CD8-positive, alpha-beta T cell (primary cell): ENCODE measurements at regions of chr1 and their contacts with region 1.

Region 1: GRCh38 chr1:159780583-159781582 is at the start of gene DUSP23:
- DNase-seq: peak; percentile 90 to 98 (median 95)
- ATAC-seq: peak; percentile 96
- H3K4me3 ChIP-seq: peak within 1 kb of the TSS; percentile 59 to 69
- H3K4me3 Mint-ChIP-seq: peak within 1 kb of the TSS; percentile 89
- H3K27ac ChIP-seq: peak within 1 kb of the TSS; percentile 16 to 62
- H3K27ac Mint-ChIP-seq: peak within 1 kb of the TSS; percentile 89
- H3K4me1 ChIP-seq: peaks cover 10% of the 10 kb centered on the region
- H3K4me1 Mint-ChIP-seq: peaks cover 28% of the 10 kb centered on the region
- H3K27me3 ChIP-seq: no peaks in the 10 kb centered on the region
- H3K27me3 Mint-ChIP-seq: no peaks in the 10 kb centered on the region
- CTCF ChIP-seq: peak; percentile 78
- total RNA-seq, gene DUSP23: 3.8 to 6.3 TPM

Region 2: DNA sequence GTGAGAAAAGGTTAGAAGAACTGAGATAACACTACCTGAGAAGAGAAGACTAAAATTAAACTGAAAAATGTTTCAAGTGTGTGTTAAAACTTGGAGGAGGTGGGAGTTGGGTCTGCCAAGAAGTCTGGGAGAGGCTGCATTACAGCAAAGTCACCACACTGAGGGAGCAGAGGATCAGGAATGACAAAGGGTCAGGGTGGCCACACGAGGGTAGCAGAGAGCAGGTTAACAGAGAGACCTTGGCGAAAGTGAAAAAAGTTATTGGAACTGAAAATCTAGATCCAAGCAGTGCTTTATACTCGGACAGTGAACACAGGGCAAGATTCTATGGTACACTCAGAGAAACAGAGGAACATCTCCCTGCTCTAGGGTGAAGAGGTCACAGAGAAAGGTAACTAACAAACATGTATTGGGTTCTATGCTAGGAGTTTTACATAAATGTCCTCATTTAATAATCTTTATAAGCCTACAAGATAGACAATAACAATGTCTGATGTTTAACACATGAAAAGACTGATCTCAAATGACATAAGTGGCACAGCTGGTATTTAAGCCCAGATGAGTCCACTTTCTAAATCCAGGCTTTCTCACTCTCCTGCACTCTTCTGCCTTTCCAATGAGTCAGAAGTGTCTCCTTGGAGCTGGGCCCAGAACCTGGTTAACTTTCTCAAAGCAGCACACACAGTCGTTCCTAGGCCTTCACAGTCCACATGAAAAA is 619.7 kb before region 1 on chr1:
- CTCF ChIA-PET with region 1: no interaction called
- POLR2A ChIA-PET with region 1: no interaction called
- intact Hi-C with region 1: loop called in 1 of 2 experiments (anchors 5 kb)
- DNase-seq: peak; percentile 28 to 75 (median 63)
- ATAC-seq: peak; percentile 75
- H3K4me3 ChIP-seq: no peak overlapping the region
- H3K4me3 Mint-ChIP-seq: no peak overlapping the region
- H3K27ac ChIP-seq: no peak overlapping the region
- H3K27ac Mint-ChIP-seq: no peak overlapping the region
- H3K4me1 ChIP-seq: no peaks in the 10 kb centered on the region
- H3K4me1 Mint-ChIP-seq: peaks cover 2% of the 10 kb centered on the region
- H3K27me3 ChIP-seq: peaks cover 0 to 4% of the 10 kb centered on the region in 2 experiments
- H3K27me3 Mint-ChIP-seq: peaks cover 47% of the 10 kb centered on the region
- CTCF ChIP-seq: peak; percentile 79

Region 3: DNA sequence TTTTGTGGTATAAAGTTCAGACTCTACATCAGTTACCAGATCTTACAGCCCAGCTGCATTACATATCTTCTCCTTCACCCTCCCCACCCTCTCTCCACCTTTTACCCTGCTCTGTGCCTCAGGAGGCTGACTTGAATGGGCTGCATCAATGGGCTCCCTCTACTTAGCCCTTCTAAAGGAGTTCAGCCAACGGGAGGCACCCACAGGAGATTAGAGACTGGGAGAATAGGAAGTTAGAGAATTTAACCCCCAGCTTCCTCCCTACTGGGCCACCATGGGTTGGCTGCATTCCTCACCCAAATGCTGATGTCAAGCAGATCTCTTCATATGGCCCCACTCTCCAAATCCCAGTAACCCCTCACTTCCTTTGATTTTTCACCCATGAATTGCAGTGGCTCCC is 17.2 kb before region 1 on chr1:
- CTCF ChIA-PET with region 1: no interaction called
- POLR2A ChIA-PET with region 1: no interaction called
- intact Hi-C with region 1: no loop called
- DNase-seq: no peak
- ATAC-seq: no peak
- H3K4me3 ChIP-seq: no peak overlapping the region
- H3K4me3 Mint-ChIP-seq: no peak overlapping the region
- H3K27ac ChIP-seq: no peak overlapping the region
- H3K27ac Mint-ChIP-seq: no peak overlapping the region
- H3K4me1 ChIP-seq: no peaks in the 10 kb centered on the region
- H3K4me1 Mint-ChIP-seq: no peaks in the 10 kb centered on the region
- H3K27me3 ChIP-seq: no peaks in the 10 kb centered on the region
- H3K27me3 Mint-ChIP-seq: peaks cover 13% of the 10 kb centered on the region
- CTCF ChIP-seq: no peak

Region 4: DNA sequence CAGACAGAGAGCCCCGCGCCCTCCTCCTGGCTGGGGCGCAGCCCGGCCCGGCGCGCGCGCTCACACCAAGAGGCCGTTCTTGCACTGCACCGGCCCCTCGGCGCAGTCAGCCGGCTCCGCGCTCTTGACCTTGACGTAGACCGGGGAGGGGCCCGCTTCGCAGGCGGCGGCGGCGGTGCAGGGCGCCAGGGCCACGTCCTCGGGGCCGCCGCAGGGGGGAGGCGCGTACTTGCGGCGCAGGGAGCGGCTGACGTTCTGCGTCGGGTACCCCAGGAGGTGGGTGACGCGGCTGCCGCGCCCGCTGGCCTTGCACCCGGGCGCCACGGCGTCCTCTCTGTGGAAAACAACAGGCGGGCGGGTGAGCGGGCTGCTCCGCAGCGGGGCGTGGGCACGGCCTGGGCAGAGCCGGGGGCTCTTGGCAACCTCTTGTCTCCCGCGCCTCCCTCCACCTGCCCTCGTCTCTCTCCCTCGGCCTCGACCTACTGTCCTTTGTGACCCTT is 73.9 kb after region 1 on chr1:
- CTCF ChIA-PET with region 1: interaction called, 3 read pairs
- POLR2A ChIA-PET with region 1: interaction called, 3 read pairs
- intact Hi-C with region 1: loop called (anchors 1 kb)
- DNase-seq: peak; percentile 47 to 88 (median 77)
- ATAC-seq: peak; percentile 93
- H3K4me3 ChIP-seq: peak overlapping the region; percentile 70 to 71
- H3K4me3 Mint-ChIP-seq: peak overlapping the region; percentile 92
- H3K27ac ChIP-seq: peak overlapping the region; percentile 70 to 80
- H3K27ac Mint-ChIP-seq: peak overlapping the region; percentile 93
- H3K4me1 ChIP-seq: peaks cover 18% of the 10 kb centered on the region
- H3K4me1 Mint-ChIP-seq: peaks cover 37% of the 10 kb centered on the region
- H3K27me3 ChIP-seq: no peaks in the 10 kb centered on the region
- H3K27me3 Mint-ChIP-seq: no peaks in the 10 kb centered on the region
- CTCF ChIP-seq: no peak

Region 5: DNA sequence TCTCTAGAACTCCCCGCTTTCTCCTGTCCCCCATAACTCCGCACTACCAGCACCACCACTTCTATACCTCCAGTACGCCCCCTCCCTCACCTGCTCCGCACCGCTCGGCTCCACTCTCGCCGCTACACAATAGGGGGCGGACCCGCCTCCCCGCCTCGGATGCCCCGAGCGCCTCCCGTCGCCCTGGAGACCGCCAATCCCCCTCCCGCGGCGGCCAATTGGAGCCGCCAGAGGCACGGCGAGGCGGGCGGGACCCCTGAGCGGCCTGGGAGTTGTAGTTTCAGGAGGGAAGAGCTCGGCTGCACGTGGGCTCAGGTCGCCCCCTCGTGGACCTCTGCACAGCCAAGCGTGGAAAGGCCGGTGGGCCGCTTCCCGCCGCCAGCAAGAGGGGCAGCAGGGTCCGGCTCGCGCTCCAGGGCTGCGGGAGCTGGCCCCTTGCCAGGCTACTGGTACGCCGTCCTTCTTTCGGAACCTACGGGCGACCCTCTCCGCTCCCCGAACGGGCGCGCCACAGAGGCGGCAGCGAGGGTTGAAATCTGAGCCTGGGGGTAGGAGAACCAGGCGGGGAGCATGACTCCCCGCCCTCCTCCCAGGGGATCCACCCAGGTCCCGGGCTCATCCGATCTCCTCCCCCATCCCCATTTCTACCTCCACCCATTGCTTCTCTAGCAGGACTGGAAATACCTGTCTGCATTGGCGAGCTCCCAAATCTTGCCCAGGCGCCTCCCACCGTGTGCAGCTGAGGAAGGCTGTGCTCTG is 164.8 kb after region 1 on chr1 and contains the start of gene IGSF9:
- CTCF ChIA-PET with region 1: interaction called, 3 read pairs
- POLR2A ChIA-PET with region 1: no interaction called
- intact Hi-C with region 1: loop called (anchors 1 kb)
- DNase-seq: peak; percentile 67 to 92 (median 86)
- ATAC-seq: peak; percentile 97
- H3K4me3 ChIP-seq: peak within 1 kb of the TSS; percentile 13 to 32
- H3K4me3 Mint-ChIP-seq: peak within 1 kb of the TSS; percentile 68
- H3K27ac ChIP-seq: no peak within 1 kb of the TSS
- H3K27ac Mint-ChIP-seq: no peak within 1 kb of the TSS
- H3K4me1 ChIP-seq: peaks cover 12% of the 10 kb centered on the region
- H3K4me1 Mint-ChIP-seq: peaks cover 13% of the 10 kb centered on the region
- H3K27me3 ChIP-seq: peaks cover 5 to 16% of the 10 kb centered on the region in 2 experiments
- H3K27me3 Mint-ChIP-seq: peaks cover 26% of the 10 kb centered on the region
- CTCF ChIP-seq: peak; percentile 67
- total RNA-seq, gene IGSF9: not detected

Region 6: DNA sequence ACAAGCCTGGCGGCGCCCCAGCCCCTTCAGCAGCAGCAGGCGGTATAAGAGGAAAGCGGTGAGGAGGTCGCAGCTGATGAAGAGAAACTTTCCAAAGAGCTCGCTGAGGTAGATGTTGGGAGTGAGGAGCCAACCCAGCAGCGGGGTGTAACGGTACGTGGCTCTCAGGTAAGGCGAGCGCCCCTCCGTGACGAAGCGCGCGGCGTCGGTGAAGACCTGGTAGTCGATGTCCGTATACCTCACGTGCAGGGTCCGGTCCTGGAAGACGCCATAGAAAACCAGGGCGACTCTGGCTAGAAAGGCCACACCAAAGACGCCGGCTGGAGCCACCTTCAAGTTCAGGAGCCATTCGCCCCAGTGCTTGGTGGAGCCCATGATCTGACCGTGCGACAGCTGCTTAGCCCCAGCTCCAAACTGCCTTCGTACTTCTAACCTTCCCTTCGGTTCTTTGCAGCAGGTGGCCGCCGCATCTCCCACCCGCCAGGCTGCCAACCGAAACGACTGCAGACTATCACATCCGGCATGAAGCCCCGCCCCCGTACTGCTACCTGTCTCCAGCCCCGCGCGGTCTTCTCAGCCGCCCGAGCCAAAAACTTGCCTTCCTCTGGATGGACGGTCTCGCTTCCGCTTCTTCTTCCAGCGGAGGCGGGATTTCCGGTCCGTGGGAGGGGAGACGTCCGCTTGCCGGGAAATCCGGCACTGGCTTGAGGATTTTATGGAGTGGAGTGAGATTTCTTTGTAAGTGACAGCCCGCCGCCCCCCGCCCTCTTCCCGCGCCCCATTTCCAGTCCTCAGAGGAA is 250.7 kb after region 1 on chr1 and contains the start of gene PIGM:
- CTCF ChIA-PET with region 1: interaction called, 3 read pairs
- POLR2A ChIA-PET with region 1: no interaction called
- intact Hi-C with region 1: loop called (anchors 2 kb)
- DNase-seq: peak; percentile 78 to 96 (median 94)
- ATAC-seq: peak; percentile 98
- H3K4me3 ChIP-seq: peak within 1 kb of the TSS; percentile 68 to 90
- H3K4me3 Mint-ChIP-seq: peak within 1 kb of the TSS; percentile 98
- H3K27ac ChIP-seq: peak within 1 kb of the TSS; percentile 58
- H3K27ac Mint-ChIP-seq: peak within 1 kb of the TSS; percentile 93
- H3K4me1 ChIP-seq: peaks cover 23% of the 10 kb centered on the region
- H3K4me1 Mint-ChIP-seq: peaks cover 40% of the 10 kb centered on the region
- H3K27me3 ChIP-seq: no peaks in the 10 kb centered on the region
- H3K27me3 Mint-ChIP-seq: no peaks in the 10 kb centered on the region
- CTCF ChIP-seq: no peak
- total RNA-seq, gene PIGM: 1.4 to 1.6 TPM

Region 7: DNA sequence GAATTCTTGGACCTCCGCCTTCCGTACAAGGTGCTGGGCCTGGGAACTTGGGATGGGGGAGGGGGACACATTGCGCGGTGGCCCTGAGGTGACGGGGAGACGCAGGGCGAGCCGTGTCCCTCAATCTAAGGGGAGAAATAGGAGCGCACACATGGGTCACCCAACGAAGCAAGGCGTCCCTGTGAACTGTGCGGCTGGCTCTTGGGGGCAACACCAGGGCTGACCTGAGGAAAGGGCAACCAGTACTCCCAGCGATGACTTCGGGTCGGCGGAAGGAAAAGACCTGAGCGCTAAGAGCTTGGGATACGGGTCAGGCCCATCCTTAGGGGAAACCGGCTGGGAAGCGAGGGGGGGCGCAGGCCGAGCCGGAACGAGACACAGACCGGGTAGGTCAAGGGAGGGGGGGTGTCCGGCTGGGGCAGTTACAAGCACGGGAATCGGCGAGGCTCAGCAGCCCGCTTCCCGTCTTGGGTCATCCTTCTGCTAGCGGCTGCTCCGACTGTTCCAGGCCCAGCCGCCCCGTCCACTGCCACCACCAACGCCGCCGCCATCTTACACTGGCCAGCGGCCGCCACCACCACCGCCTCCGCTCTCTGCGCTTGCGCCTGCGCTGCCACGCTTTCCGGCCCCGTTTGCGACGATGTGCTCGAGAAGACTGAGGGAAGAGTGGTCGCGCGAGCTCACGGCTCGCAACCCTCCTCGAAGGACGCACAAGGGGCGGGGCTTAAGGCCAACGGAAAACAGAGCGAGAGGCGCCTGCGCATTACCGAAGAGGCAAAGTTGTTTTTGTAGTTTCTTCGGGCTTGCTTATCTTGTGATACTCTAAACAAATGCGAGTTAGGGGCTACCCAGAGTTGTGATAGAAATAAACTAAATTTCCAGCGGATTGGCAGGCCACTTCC is 481.3 kb after region 1 on chr1 and contains the start of gene DCAF8:
- CTCF ChIA-PET with region 1: no interaction called
- POLR2A ChIA-PET with region 1: no interaction called
- intact Hi-C with region 1: loop called in 1 of 2 experiments (anchors 5 kb)
- DNase-seq: peak; percentile 97 to 99 (median 98)
- ATAC-seq: peak; percentile 87
- H3K4me3 ChIP-seq: peak within 1 kb of the TSS; percentile 91 to 99
- H3K4me3 Mint-ChIP-seq: peak within 1 kb of the TSS; percentile 96
- H3K27ac ChIP-seq: peak within 1 kb of the TSS; percentile 83 to 99
- H3K27ac Mint-ChIP-seq: peak within 1 kb of the TSS; percentile 98
- H3K4me1 ChIP-seq: peaks cover 31% of the 10 kb centered on the region
- H3K4me1 Mint-ChIP-seq: peaks cover 41% of the 10 kb centered on the region
- H3K27me3 ChIP-seq: no peaks in the 10 kb centered on the region
- H3K27me3 Mint-ChIP-seq: no peaks in the 10 kb centered on the region
- CTCF ChIP-seq: no peak
- total RNA-seq, gene DCAF8: 152 to 162 TPM